CD8-positive, alpha-beta T cell (primary cell): ENCODE measurements at regions of chr5 and their contacts with region 1.

Region 1: GRCh38 chr5:96885518-96886338 is 9.4 kb downstream of the ERAP2 start:
- DNase-seq: peak in 4 of 9 experiments; percentile 37 to 80 (median 48)
- ATAC-seq: peak; percentile 85
- H3K4me3 ChIP-seq: peak overlapping the region in 1 of 2 experiments; percentile 23
- H3K4me3 Mint-ChIP-seq: peak overlapping the region; percentile 71
- H3K27ac ChIP-seq: peak overlapping the region; percentile 51 to 68
- H3K27ac Mint-ChIP-seq: peak overlapping the region; percentile 93
- H3K4me1 ChIP-seq: peaks cover 58% of the 10 kb centered on the region
- H3K4me1 Mint-ChIP-seq: peaks cover 69% of the 10 kb centered on the region
- H3K27me3 ChIP-seq: no peaks in the 10 kb centered on the region
- H3K27me3 Mint-ChIP-seq: no peaks in the 10 kb centered on the region
- CTCF ChIP-seq: no peak

Region 2: GRCh38 chr5:96904054-96904931 is 18.6 kb after region 1 on chr5:
- CTCF ChIA-PET with region 1: interaction called, 3 read pairs
- POLR2A ChIA-PET with region 1: interaction called, 3 read pairs
- intact Hi-C with region 1: loop called in 1 of 2 experiments (anchors 2 kb)
- DNase-seq: no peak
- ATAC-seq: no peak
- H3K4me3 ChIP-seq: no peak overlapping the region
- H3K4me3 Mint-ChIP-seq: no peak overlapping the region
- H3K27ac ChIP-seq: no peak overlapping the region
- H3K27ac Mint-ChIP-seq: peak overlapping the region; percentile 49
- H3K4me1 ChIP-seq: peaks cover under 1% of the 10 kb centered on the region
- H3K4me1 Mint-ChIP-seq: peaks cover 13% of the 10 kb centered on the region
- H3K27me3 ChIP-seq: no peaks in the 10 kb centered on the region
- H3K27me3 Mint-ChIP-seq: no peaks in the 10 kb centered on the region
- CTCF ChIP-seq: no peak

Region 3: GRCh38 chr5:97172227-97172626 is 286.5 kb after region 1 on chr5:
- CTCF ChIA-PET with region 1: no interaction called
- POLR2A ChIA-PET with region 1: no interaction called
- intact Hi-C with region 1: no loop called
- DNase-seq: no peak
- ATAC-seq: no peak
- H3K4me3 ChIP-seq: no peak overlapping the region
- H3K4me3 Mint-ChIP-seq: no peak overlapping the region
- H3K27ac ChIP-seq: no peak overlapping the region
- H3K27ac Mint-ChIP-seq: peak overlapping the region; percentile 0
- H3K4me1 ChIP-seq: no peaks in the 10 kb centered on the region
- H3K4me1 Mint-ChIP-seq: peaks cover 13% of the 10 kb centered on the region
- H3K27me3 ChIP-seq: no peaks in the 10 kb centered on the region
- H3K27me3 Mint-ChIP-seq: no peaks in the 10 kb centered on the region
- CTCF ChIP-seq: no peak

Region 4: DNA sequence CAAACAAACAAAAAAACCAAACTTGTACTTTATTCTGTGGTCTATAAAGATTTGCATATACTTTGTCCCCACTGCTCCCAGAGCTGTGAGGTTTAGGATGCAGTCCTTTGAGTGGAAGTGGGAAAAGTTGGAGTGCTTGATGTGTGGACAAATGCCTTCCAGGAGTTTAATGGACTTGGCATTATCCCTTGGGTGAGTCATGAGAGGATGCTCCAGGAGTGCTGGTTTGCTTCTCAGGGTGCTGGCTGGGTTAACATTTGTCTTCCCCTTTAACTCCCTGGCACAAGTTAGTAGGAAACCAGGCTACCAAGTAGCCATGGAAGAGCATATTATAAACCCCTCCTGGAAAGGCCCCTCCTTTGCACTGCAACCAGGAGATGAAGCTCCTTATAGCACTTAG is 714.8 kb after region 1 on chr5:
- CTCF ChIA-PET with region 1: no interaction called
- POLR2A ChIA-PET with region 1: no interaction called
- intact Hi-C with region 1: no loop called
- DNase-seq: no peak
- ATAC-seq: no peak
- H3K4me3 ChIP-seq: no peak overlapping the region
- H3K4me3 Mint-ChIP-seq: no peak overlapping the region
- H3K27ac ChIP-seq: no peak overlapping the region
- H3K27ac Mint-ChIP-seq: no peak overlapping the region
- H3K4me1 ChIP-seq: no peaks in the 10 kb centered on the region
- H3K4me1 Mint-ChIP-seq: no peaks in the 10 kb centered on the region
- H3K27me3 ChIP-seq: no peaks in the 10 kb centered on the region
- H3K27me3 Mint-ChIP-seq: no peaks in the 10 kb centered on the region
- CTCF ChIP-seq: no peak